Thyroid gland (tissue), 4 donors: ENCODE measurements at regions of chr9 and their contacts with region 1.

Region 1: DNA sequence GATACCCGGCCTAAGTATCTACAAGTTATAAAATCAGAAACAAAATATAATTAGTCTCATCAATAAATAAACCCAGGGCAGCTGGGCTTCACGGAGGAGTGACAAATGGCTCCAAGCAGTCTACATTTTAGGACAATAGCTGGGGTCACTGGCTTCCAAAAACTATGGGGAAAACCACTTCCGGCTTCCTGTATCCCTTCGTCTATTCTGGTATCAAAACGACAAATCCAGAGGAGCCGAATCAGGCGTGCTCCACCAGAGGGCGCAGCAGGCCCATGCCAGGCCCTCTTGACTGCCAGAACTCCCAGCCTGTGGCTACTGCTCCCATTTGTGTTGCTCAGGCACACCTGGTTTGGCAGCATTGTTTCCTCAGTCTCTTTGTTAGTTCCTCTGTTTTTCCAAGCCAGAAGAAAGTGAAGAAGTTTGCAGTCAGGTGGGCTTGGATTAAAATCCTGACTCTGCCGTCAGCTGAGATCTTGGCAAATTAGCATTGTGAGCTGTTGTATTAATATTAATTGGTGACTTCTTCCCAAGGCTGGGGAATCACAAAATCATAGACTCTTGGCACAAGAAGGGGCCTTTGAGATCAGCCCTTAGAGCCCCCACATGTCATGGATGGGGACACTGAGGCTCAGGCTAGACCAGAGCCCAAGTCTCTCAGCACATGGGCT is 11.6 kb upstream of the RAB14 start:
- DNase-seq: peak; percentile 91 to 95
- H3K4me3 ChIP-seq: no peak overlapping the region
- H3K27ac ChIP-seq: peak overlapping the region in 2 of 3 donors; percentile 45 to 63
- H3K4me1 ChIP-seq: peaks cover 0 to 7% of the 10 kb centered on the region in 2 donors
- H3K27me3 ChIP-seq: no peaks in the 10 kb centered on the region
- CTCF ChIP-seq: peak; percentile 89 to 96 (median 95)
- POLR2A ChIP-seq: no peak

Region 2: DNA sequence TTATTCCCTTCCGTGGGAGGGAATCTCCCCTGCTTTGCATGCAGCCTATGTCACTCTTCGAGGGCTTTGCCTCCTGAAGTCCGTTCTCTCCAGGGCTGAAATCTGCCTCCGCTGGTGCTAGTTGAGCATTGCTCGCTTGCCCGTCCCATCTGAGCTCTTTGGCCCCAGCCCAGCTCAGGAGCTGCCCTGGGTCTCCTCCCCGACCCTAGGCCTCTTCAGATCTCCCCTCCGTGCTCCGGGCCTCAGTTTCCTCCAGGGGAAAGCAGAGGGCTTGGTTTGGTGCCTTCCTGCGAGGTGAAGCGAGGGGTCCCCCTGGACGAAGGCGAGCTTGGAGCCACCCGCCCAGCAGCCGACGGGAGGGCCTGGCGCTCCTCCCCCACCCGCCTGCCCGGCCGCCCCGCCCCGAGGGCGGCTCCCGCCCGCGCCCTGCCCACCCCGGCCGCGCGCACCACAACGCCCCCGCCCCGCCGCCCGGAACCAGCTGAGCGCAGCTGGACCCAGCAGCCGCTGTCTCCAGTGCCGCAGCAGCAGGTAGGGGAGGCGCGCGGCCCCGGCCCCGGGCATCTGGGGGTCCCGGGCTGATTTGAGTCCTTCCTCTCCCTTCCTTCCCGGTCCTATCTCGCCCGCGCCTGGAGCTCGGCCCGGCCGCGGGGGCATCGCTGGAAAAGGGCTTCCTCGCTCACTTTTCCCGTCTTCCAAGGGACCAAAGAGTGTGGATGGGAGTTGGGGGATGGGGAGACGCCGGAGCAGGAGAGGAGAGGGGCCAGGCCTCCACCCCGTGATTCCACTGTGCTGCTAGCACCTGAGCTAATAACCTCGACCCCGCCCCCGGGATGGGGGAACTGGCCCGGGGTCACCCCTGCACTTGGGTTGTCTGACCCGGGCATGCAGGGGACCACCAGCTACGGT is 54.7 kb after region 1 on chr9 and contains the start of gene GSN:
- intact Hi-C with region 1: loop called (anchors 5 kb)
- DNase-seq: peak; percentile 80 to 86
- H3K4me3 ChIP-seq: peak within 1 kb of the TSS in 2 of 3 donors; percentile 69 to 83
- H3K27ac ChIP-seq: peak within 1 kb of the TSS; percentile 57 to 85 (median 79)
- H3K4me1 ChIP-seq: peaks cover 39 to 58% of the 10 kb centered on the region in 2 donors
- H3K27me3 ChIP-seq: no peaks in the 10 kb centered on the region
- CTCF ChIP-seq: peak in 3 of 6 experiments; percentile 18 to 27 (median 22)
- POLR2A ChIP-seq: peak; percentile 32 to 81
- total RNA-seq, gene GSN: 1,151 to 1,624 (median 1,443) TPM

Region 3: DNA sequence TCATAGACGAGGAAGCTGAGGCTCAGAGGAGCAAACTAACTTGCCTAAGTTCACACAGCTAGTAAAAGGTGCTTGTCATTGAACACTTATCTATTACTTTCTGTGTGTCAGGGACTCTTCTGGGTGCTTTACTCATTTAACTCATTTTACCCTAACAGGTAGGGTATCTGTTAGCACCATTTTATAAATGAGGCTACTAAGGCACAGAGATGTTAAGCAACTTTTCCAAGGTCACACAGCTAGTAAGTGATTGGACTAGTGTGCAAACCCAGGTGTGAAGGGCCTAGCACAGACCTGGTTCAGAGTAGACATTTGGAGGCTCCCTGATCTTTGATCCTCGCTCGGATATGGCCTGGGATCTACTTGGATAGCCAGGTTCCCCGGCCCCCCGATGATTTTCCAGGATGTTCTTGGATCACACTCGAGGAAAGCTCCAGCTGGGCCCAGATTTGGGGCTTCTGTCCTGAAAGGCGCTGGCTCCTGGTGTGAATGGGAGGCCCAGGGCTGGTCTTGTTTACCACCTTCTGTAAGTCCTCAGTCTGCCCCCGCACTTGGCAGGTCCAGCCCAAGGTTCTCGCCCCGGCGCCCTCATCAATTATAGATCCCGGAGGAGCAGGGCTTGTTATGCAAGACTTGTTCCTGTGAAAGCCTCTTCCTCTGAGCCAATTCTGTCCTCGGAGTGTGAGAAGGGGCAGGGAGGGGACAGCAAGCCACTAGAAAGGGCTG is 92.2 kb after region 1 on chr9:
- intact Hi-C with region 1: no loop called
- DNase-seq: peak; percentile 41 to 44
- H3K4me3 ChIP-seq: no peak overlapping the region
- H3K27ac ChIP-seq: peak overlapping the region; percentile 11 to 98 (median 94)
- H3K4me1 ChIP-seq: peaks cover 0 to 27% of the 10 kb centered on the region in 2 donors
- H3K27me3 ChIP-seq: no peaks in the 10 kb centered on the region
- CTCF ChIP-seq: no peak
- POLR2A ChIP-seq: no peak

Region 4: GRCh38 chr9:121317742-121318489 is 104.6 kb after region 1 on chr9:
- intact Hi-C with region 1: loop called (anchors 5 kb)
- DNase-seq: peak; percentile 33 to 64
- H3K4me3 ChIP-seq: no peak overlapping the region
- H3K27ac ChIP-seq: peak overlapping the region; percentile 50 to 91 (median 80)
- H3K4me1 ChIP-seq: peaks cover 29 to 53% of the 10 kb centered on the region in 2 donors
- H3K27me3 ChIP-seq: no peaks in the 10 kb centered on the region
- CTCF ChIP-seq: no peak
- POLR2A ChIP-seq: no peak

Region 5: GRCh38 chr9:121399883-121400607 is 186.8 kb after region 1 on chr9:
- intact Hi-C with region 1: loop called (anchors 5 kb)
- DNase-seq: no peak
- H3K4me3 ChIP-seq: no peak overlapping the region
- H3K27ac ChIP-seq: no peak overlapping the region
- H3K4me1 ChIP-seq: no peaks in the 10 kb centered on the region
- H3K27me3 ChIP-seq: no peaks in the 10 kb centered on the region
- CTCF ChIP-seq: peak; percentile 43 to 89 (median 56)
- POLR2A ChIP-seq: no peak